ENCODE measurements at regions of chr5 and their contacts with region 1.

Region 1: GRCh38 chr5:55159763-55160492 is at the start of gene GPX8:
- DNase-seq: peak in 8 of 35 experiments; percentile 8 to 75 (median 22)
- ATAC-seq: peak; percentile 63 to 81 (median 66)
- H3K4me3 ChIP-seq: no peak within 1 kb of the TSS
- H3K4me3 Mint-ChIP-seq: no peak within 1 kb of the TSS
- H3K27ac ChIP-seq: no peak within 1 kb of the TSS
- H3K27ac Mint-ChIP-seq: no peak within 1 kb of the TSS
- H3K4me1 ChIP-seq: no peaks in the 10 kb centered on the region
- H3K4me1 Mint-ChIP-seq: no peaks in the 10 kb centered on the region
- H3K27me3 ChIP-seq: no peaks in the 10 kb centered on the region
- H3K27me3 Mint-ChIP-seq: peaks cover 21 to 32% of the 10 kb centered on the region in 2 donors
- total RNA-seq, gene GPX8: 0.20 TPM in 1 of 5 donors, not detected in the others

Region 2: DNA sequence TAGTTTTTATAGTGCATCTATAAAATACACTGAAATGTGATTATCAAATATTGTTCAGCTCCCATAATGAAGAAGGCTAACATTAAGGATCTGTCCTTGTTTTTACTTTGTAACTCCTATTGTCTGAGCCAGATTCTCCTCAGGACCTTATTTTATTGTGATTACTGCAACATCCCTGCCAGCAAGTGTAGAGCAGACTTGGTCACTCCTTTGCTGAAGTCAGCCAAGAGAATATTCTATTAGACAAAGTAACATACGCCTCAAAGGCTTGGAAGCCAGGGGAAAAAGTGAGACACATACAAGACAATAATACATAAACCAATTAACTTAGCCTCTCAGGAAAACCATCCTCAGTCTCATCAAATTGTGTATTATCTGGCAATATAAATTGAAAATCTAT is 1119.1 kb before region 1 on chr5:
- CTCF ChIA-PET with region 1: interaction called in 1 of 2 experiments, 12 read pairs
- POLR2A ChIA-PET with region 1: no interaction called
- DNase-seq: no peak
- ATAC-seq: no peak
- H3K4me3 ChIP-seq: no peak overlapping the region
- H3K4me3 Mint-ChIP-seq: no peak overlapping the region
- H3K27ac ChIP-seq: no peak overlapping the region
- H3K27ac Mint-ChIP-seq: no peak overlapping the region
- H3K4me1 ChIP-seq: no peaks in the 10 kb centered on the region
- H3K4me1 Mint-ChIP-seq: no peaks in the 10 kb centered on the region
- H3K27me3 ChIP-seq: no peaks in the 10 kb centered on the region
- H3K27me3 Mint-ChIP-seq: no peaks in the 10 kb centered on the region

Region 3: GRCh38 chr5:54517174-54518092 is 642.5 kb before region 1 on chr5 and contains the start of gene SNX18:
- CTCF ChIA-PET with region 1: interaction called, 3 to 11 read pairs
- POLR2A ChIA-PET with region 1: no interaction called
- DNase-seq: peak; percentile 80 to 96 (median 91)
- ATAC-seq: peak; percentile 92 to 93 (median 92)
- H3K4me3 ChIP-seq: peak within 1 kb of the TSS; percentile 64 to 84
- H3K4me3 Mint-ChIP-seq: peak within 1 kb of the TSS; percentile 79 to 85 (median 81)
- H3K27ac ChIP-seq: no peak within 1 kb of the TSS
- H3K27ac Mint-ChIP-seq: peak within 1 kb of the TSS; percentile 21 to 22
- H3K4me1 ChIP-seq: peaks cover 29 to 31% of the 10 kb centered on the region in 2 experiments
- H3K4me1 Mint-ChIP-seq: peaks cover 30 to 49% (median 40%) of the 10 kb centered on the region in 3 donors
- H3K27me3 ChIP-seq: no peaks in the 10 kb centered on the region
- H3K27me3 Mint-ChIP-seq: no peaks in the 10 kb centered on the region
- total RNA-seq, gene SNX18: 13.7 to 35.7 (median 31.1) TPM

Region 4: DNA sequence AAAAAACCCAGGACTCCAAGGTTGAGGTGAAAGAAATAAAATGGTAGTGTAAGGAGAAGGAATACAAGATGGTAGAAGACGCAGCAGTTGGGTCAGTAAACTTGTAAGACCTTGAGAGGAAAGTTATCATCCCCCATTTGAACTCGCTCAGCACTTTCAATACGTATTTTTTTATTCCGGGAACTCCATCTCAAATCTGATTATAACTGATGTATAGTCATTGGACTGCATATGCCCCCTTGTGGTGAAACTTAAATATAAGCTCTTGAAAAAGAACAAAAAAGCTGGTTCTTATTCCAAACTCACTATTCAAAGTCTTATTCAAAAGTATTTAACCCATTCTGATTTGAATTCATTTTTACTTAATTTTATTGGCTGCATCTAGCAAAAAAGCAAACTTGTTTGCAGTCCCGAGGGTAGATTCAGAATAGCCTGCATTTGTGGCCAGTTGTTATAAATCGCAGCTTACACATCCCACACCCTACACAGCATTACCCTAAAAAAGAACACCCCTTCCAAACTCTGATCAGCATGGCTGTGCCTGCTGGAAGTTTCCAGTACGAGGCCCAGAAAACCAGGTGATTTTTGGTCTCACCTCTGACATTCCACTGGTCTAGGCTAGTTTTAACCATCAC is 292.5 kb before region 1 on chr5:
- CTCF ChIA-PET with region 1: interaction called in 1 of 2 experiments, 21 read pairs
- POLR2A ChIA-PET with region 1: no interaction called
- DNase-seq: peak in 4 of 35 experiments; percentile 8 to 69 (median 10)
- ATAC-seq: peak; percentile 51 to 69 (median 66)
- H3K4me3 ChIP-seq: peak overlapping the region in 1 of 2 donors; percentile 10
- H3K4me3 Mint-ChIP-seq: peak overlapping the region; percentile 13 to 35 (median 31)
- H3K27ac ChIP-seq: no peak overlapping the region
- H3K27ac Mint-ChIP-seq: no peak overlapping the region
- H3K4me1 ChIP-seq: peaks cover 0 to 2% of the 10 kb centered on the region in 2 experiments
- H3K4me1 Mint-ChIP-seq: peaks cover 8 to 9% (median 8%) of the 10 kb centered on the region in 3 donors
- H3K27me3 ChIP-seq: no peaks in the 10 kb centered on the region
- H3K27me3 Mint-ChIP-seq: peaks cover 9 to 26% of the 10 kb centered on the region in 2 donors

Region 5: GRCh38 chr5:54905943-54906537 is 253.9 kb before region 1 on chr5:
- CTCF ChIA-PET with region 1: interaction called, 36 to 120 read pairs
- POLR2A ChIA-PET with region 1: no interaction called
- DNase-seq: peak in 33 of 35 experiments; percentile 10 to 79 (median 57)
- ATAC-seq: peak in 2 of 4 experiments; percentile 38 to 41
- H3K4me3 ChIP-seq: no peak overlapping the region
- H3K4me3 Mint-ChIP-seq: no peak overlapping the region
- H3K27ac ChIP-seq: no peak overlapping the region
- H3K27ac Mint-ChIP-seq: no peak overlapping the region
- H3K4me1 ChIP-seq: peaks cover 6 to 11% of the 10 kb centered on the region in 2 experiments
- H3K4me1 Mint-ChIP-seq: peaks cover 10 to 11% (median 11%) of the 10 kb centered on the region in 3 donors
- H3K27me3 ChIP-seq: no peaks in the 10 kb centered on the region
- H3K27me3 Mint-ChIP-seq: peaks cover 10 to 12% of the 10 kb centered on the region in 2 donors

Region 6: DNA sequence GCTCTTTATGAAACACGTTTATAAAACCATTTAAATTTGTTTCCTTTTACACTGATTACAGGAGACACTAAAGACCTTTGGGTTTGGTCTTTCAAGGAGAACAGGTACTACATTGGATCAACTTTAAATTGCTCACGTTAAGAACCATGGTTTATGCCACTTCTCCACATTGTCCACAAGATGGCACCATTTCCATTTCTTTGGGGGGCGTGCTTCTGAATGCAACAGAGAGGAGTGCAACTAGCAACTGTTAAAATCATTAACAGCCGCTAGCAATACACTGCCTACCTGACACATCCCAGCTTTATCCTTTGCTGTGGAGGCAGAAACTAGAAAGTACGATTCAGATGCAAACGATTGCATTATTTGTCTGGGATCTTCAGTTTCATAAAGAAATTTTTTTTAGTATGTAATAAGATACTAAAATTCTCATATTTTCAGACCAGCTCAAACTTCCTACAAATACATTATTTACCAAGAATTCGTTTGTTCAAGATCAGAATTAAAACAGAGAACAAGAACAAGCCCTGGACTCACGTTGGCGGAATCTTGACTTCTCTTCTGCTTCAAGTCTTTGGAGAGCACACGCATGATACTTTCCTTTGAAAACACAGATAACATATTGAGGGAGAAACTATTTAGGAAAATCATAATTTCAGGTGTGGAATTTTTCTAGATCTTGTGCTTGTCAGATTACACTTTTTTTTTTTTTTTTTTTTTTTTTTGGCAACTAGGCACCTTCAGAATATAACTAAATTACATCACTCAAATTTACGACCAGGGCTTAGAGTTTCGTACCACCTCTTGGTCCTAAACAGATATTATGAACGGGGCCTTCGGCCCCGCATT is 12.3 kb after region 1 on chr5:
- CTCF ChIA-PET with region 1: interaction called, 5 to 11 read pairs
- POLR2A ChIA-PET with region 1: no interaction called
- DNase-seq: peak; percentile 13 to 91 (median 52)
- ATAC-seq: peak; percentile 58 to 76 (median 72)
- H3K4me3 ChIP-seq: peak overlapping the region; percentile 53 to 88
- H3K4me3 Mint-ChIP-seq: peak overlapping the region; percentile 68 to 80 (median 75)
- H3K27ac ChIP-seq: no peak overlapping the region
- H3K27ac Mint-ChIP-seq: no peak overlapping the region
- H3K4me1 ChIP-seq: peaks cover 18 to 30% of the 10 kb centered on the region in 2 experiments
- H3K4me1 Mint-ChIP-seq: peaks cover 35 to 38% (median 36%) of the 10 kb centered on the region in 3 donors
- H3K27me3 ChIP-seq: peaks cover 20 to 42% of the 10 kb centered on the region in 2 experiments
- H3K27me3 Mint-ChIP-seq: peaks cover 52 to 70% of the 10 kb centered on the region in 2 donors

Region 7: GRCh38 chr5:55324815-55325418 is 165.0 kb after region 1 on chr5:
- CTCF ChIA-PET with region 1: no interaction called
- POLR2A ChIA-PET with region 1: no interaction called
- DNase-seq: peak in 1 of 35 experiments; percentile 57
- ATAC-seq: peak in 2 of 4 experiments; percentile 38 to 67
- H3K4me3 ChIP-seq: no peak overlapping the region
- H3K4me3 Mint-ChIP-seq: no peak overlapping the region
- H3K27ac ChIP-seq: no peak overlapping the region
- H3K27ac Mint-ChIP-seq: peak overlapping the region in 1 of 2 donors; percentile 7
- H3K4me1 ChIP-seq: no peaks in the 10 kb centered on the region
- H3K4me1 Mint-ChIP-seq: peaks cover 29 to 39% (median 31%) of the 10 kb centered on the region in 3 donors
- H3K27me3 ChIP-seq: no peaks in the 10 kb centered on the region
- H3K27me3 Mint-ChIP-seq: no peaks in the 10 kb centered on the region

Measured in T-cell (primary cell).